ENCODE measurements at regions of chr3 and their contacts with region 1.

Region 1: GRCh38 chr3:142723968-142724681 is at the start of gene TRPC1:
- DNase-seq: peak; percentile 70 to 96 (median 77)

Region 2: DNA sequence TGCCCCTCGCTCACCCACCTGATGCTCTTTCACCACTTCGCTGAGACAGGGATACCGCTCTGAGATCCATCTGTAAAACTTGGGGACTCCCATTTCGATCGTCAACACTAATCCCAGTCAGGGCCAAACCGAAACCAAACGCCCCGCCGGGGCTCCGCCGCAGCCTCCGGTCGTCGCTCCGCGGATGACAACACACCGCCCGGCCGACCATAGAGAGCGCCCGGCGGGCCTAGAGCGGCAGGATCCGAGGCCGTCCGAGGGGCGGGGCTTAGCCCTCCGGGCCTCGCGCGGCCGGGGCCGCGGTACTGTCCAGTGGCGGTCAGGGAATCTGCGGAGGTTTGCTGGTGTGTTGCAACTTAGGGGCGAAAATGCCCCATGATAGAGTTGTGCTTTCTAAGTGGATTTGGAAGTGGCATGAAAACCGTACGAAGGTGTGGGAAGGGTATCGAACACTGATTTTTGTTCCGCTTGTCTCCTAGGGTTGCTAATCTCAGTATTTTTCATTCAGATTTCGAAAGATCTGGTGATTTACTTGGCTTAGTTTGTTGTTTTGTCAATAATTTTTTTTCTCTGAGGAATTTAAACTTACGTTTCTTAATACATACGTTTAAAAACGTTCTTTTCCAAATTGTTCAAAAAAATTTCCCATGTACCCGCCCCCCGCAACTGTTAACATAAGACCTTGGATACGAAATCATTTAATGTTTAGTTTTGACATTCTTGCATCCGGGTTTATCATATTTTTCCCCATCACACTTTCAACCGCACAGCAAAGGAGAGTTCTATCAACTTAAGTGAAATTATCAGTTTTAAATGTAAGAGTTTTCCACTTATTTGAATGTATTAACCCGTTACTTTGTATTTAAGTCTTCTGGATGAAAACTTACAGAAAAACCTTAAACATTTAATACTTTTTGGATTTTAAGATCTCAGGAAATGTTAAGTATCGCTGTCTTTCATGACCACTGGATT is 276.0 kb before region 1 on chr3 and contains the start of gene XRN1:
- intact Hi-C with region 1: loop called (anchors 5 kb)
- DNase-seq: peak; percentile 88 to 98 (median 92)

Region 3: DNA sequence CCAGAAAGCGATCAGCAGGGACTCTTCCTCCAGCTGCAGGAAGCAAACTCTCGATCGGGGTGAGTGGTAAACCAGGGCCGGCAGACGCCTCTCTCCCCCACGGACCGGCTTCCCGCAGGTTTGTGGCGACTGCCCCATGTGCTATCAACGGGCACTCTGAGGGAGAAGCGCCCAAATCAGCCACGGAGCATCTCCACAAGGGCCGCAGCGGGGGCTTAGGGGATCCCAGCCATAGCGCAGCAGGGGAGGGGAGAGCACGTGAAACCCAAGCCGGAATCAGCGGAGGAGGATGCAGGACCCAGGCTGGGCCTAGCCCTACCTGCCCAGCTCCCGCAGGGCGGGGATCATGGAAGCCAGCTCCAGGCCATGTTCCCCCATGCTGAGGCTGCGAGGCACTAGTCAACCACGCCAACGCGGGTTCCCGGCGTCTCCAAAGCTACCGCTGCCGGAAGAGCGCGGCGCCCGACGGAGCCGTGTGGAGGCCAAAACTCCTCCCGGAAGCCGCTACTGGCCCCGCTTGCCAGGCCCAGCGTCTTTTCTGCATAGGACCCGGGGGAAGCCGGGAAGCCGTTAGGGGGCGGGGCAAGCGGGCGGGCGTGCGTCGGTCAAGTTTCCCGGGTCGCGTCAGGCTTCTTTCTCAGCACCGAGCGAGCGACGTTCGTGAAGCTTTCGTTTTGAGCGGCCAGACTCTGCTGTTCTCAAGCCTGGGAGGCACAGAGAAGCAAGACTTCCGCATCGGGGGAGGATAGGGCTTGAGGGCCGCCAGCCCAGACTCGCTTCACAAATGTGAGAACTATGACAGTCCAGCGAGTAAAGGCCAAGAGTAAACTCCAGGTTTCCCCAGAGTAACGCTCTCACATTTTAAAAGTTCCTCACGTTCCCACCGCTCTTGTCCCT is 145.6 kb before region 1 on chr3 and contains the start of gene ATR:
- intact Hi-C with region 1: loop called (anchors 5 kb)
- DNase-seq: peak; percentile 92 to 99 (median 96)

Region 4: GRCh38 chr3:142595951-142596725 is 128.0 kb before region 1 on chr3 and contains the start of gene PLS1:
- intact Hi-C with region 1: loop called (anchors 5 kb)
- DNase-seq: peak; percentile 73 to 97 (median 80)

Region 5: DNA sequence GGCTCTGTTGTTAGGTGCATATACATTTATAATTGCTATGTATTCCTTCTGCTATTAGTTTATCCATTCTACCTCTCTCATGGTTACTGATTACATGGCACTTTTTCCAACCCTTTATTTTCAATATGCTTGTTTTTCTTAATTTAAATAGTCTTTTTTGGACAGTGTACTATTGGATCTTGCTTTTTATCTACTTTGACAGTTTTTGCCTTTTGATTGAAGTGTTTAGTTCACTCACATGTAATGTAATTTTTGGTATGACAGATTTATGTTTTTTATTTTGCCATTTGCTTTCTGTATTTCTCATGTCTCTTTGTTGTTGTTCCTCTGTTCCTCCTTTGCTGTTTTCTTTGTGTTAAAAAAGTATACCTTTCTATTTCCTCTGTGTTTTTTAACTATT is 44.2 kb after region 1 on chr3:
- intact Hi-C with region 1: no loop called
- DNase-seq: no peak

Measured in posterior cingulate gyrus (tissue), 11 donors.